Activated CD4-positive, alpha-beta memory T cell treated with anti-CD3 and anti-CD28 coated beads, Interleukin-2, amount 10 ng/mL, durations not matched to agents 7 days and 5 days (primary cell): ENCODE measurements at regions of chr3 and their contacts with region 1.

Region 1: GRCh38 chr3:25782938-25783660 is at the start of gene NGLY1:
- DNase-seq: peak; percentile 86
- H3K4me3 Mint-ChIP-seq: peak within 1 kb of the TSS; percentile 85
- H3K27ac Mint-ChIP-seq: peak within 1 kb of the TSS; percentile 81
- H3K4me1 Mint-ChIP-seq: peaks cover 49% of the 10 kb centered on the region
- H3K27me3 Mint-ChIP-seq: peaks cover 3% of the 10 kb centered on the region
- total RNA-seq, gene NGLY1: 56.4 to 61.2 TPM

Region 2: DNA sequence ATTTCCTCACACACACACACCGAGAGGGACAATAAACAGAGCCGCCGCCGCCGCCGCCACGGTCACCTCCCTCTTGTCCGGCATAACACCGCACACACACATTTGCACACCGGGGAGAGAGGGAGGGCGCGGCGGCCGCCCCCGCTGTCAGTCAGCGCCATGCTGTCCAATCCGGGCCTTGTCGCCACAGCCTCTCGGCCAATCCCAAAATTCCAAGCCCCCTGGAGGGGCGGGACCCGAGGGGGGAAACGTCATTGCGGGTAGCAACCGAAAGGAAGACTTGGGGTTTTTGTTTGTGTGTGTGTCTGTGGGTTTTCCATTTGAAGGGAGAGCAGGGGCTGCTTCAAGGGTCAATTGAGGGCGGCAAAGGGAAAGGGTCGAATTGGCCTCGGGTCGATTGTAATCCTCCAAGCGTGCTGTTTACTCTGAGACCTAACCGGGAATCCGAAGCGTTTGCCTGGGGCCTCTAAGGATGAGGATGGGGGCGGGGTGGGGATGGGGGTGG is 118.2 kb before region 1 on chr3 and contains the start of gene TOP2B:
- CTCF ChIA-PET with region 1: interaction called, 4 read pairs
- POLR2A ChIA-PET with region 1: interaction called, 11 read pairs
- DNase-seq: peak; percentile 96
- H3K4me3 Mint-ChIP-seq: peak within 1 kb of the TSS; percentile 92
- H3K27ac Mint-ChIP-seq: peak within 1 kb of the TSS; percentile 95
- H3K4me1 Mint-ChIP-seq: peaks cover 37% of the 10 kb centered on the region
- H3K27me3 Mint-ChIP-seq: peaks cover 5% of the 10 kb centered on the region
- total RNA-seq, gene TOP2B: 114 TPM

Region 3: GRCh38 chr3:26049951-26050350 is 266.9 kb after region 1 on chr3:
- CTCF ChIA-PET with region 1: no interaction called
- POLR2A ChIA-PET with region 1: no interaction called
- DNase-seq: no peak
- H3K4me3 Mint-ChIP-seq: no peak overlapping the region
- H3K27ac Mint-ChIP-seq: no peak overlapping the region
- H3K4me1 Mint-ChIP-seq: no peaks in the 10 kb centered on the region
- H3K27me3 Mint-ChIP-seq: no peaks in the 10 kb centered on the region